Activated CD8-positive, alpha-beta memory T cell treated with anti-CD3 and anti-CD28 coated beads, Interleukin-2, amount 10 ng/mL, durations not matched to agents 7 days and 5 days (primary cell): ENCODE measurements at regions of chr13 and their contacts with region 1.

Region 1: GRCh38 chr13:26985285-26985878 is 186.2 kb downstream of the USP12 start:
- DNase-seq: peak; percentile 86
- ATAC-seq: peak; percentile 91
- H3K4me3 Mint-ChIP-seq: no peak overlapping the region
- H3K27ac Mint-ChIP-seq: no peak overlapping the region
- H3K4me1 Mint-ChIP-seq: peaks cover 21% of the 10 kb centered on the region
- H3K27me3 Mint-ChIP-seq: peaks cover 17% of the 10 kb centered on the region

Region 2: DNA sequence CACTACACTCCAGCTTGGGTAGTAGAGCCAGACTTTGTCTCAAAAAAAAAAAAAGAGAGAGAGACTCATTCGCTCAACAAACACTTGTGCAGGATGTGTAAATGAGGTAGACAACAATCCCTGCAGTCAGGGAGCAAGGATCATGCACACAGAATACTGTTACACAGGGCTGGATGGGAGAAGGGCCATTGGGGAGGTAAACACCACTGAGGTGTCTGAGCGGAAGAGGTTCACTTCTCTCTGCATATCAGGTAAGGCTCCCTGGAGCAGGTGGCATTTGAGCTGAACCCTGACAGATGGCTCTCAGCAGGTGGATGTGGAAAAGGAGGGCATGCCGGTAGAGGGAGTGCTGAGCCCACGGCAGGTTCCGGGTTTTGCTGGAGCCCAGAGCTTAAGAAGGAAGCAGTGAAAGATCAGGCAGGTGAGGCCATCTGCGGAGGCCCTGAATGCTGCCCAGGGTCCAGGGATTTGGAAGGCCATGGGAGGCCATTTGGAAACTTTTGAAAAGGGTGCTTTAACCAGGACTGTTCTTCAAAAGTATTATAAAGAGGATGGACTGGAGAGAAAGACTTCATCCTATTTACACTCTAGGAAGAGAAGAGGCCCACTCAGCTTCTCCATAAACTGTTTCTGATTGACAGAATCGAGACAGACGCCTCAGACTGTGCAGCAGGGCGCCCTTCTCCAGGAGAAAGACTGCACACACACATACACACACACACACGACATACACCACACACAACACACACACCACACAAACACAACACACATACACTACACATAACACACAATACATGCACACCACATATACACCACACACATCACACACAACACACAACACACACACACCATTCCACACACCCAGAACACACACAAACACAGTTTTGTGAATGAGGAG is 13.1 kb before region 1 on chr13:
- CTCF ChIA-PET with region 1: interaction called, 17 read pairs
- DNase-seq: peak; percentile 57
- ATAC-seq: peak; percentile 78
- H3K4me3 Mint-ChIP-seq: no peak overlapping the region
- H3K27ac Mint-ChIP-seq: no peak overlapping the region
- H3K4me1 Mint-ChIP-seq: peaks cover 5% of the 10 kb centered on the region
- H3K27me3 Mint-ChIP-seq: peaks cover 3% of the 10 kb centered on the region

Region 3: GRCh38 chr13:26996965-26997752 is 11.8 kb after region 1 on chr13:
- CTCF ChIA-PET with region 1: interaction called, 15 read pairs
- DNase-seq: peak; percentile 56
- ATAC-seq: peak; percentile 89
- H3K4me3 Mint-ChIP-seq: peak overlapping the region; percentile 11
- H3K27ac Mint-ChIP-seq: peak overlapping the region; percentile 65
- H3K4me1 Mint-ChIP-seq: peaks cover 19% of the 10 kb centered on the region
- H3K27me3 Mint-ChIP-seq: peaks cover 22% of the 10 kb centered on the region

Region 4: DNA sequence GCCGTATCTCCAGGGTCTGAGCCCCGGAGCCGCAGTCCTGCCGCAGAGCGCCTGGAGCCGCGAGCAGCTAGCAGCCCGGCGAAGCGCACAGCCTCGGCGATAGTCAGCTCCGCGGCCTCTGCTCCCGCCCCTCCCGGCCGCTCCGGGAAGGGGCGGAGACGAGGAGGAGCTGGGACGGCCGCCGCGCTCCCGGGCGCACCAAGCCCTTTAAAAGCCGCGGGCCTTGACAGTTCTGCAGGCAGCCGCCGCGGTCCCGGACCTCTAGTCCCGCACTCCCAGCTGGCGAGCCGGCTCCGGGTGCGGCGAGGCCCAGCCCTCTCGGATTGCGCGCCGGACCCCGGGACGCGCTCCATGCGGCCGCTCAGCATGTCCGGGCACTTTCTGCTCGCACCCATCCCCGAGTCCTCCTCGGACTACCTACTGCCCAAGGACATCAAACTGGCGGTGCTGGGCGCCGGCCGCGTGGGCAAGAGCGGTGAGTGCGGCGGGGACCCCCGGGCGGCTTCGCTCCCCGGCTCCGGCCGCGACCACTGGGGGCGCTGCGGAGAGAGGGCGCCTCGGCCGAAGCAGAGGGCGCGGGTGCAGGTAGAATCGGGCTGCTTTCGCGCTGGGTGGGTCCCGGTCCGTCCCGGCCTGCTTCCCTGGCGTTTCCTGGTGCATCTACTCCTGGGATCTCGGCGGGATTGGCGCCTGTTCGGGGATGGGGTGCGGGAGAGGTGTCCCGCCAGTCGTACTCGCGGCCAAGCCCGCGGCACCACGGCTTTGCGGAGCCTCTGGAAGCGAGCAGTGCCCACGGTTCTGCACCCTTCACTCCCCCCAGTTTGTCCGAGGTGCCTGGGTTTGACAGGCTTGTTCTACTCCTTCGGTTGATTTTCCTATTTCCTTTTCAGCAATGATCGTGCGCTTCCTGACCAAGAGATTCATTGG is 285.5 kb after region 1 on chr13 and contains the start of gene RASL11A:
- CTCF ChIA-PET with region 1: interaction called, 13 read pairs
- DNase-seq: peak; percentile 73
- ATAC-seq: peak; percentile 94
- H3K4me3 Mint-ChIP-seq: peak within 1 kb of the TSS; percentile 80
- H3K27ac Mint-ChIP-seq: no peak within 1 kb of the TSS
- H3K4me1 Mint-ChIP-seq: peaks cover 6% of the 10 kb centered on the region
- H3K27me3 Mint-ChIP-seq: peaks cover 39% of the 10 kb centered on the region
- total RNA-seq, gene RASL11A: 0.70 to 0.91 TPM

Region 5: GRCh38 chr13:27283906-27284493 is 298.6 kb after region 1 on chr13:
- CTCF ChIA-PET with region 1: interaction called, 22 read pairs
- DNase-seq: peak; percentile 48
- ATAC-seq: peak; percentile 53
- H3K4me3 Mint-ChIP-seq: no peak overlapping the region
- H3K27ac Mint-ChIP-seq: no peak overlapping the region
- H3K4me1 Mint-ChIP-seq: no peaks in the 10 kb centered on the region
- H3K27me3 Mint-ChIP-seq: no peaks in the 10 kb centered on the region

Region 6: GRCh38 chr13:27353166-27353583 is 367.8 kb after region 1 on chr13:
- CTCF ChIA-PET with region 1: interaction called, 195 read pairs
- DNase-seq: peak; percentile 78
- ATAC-seq: peak; percentile 99
- H3K4me3 Mint-ChIP-seq: peak overlapping the region; percentile 64
- H3K27ac Mint-ChIP-seq: peak overlapping the region; percentile 84
- H3K4me1 Mint-ChIP-seq: peaks cover 22% of the 10 kb centered on the region
- H3K27me3 Mint-ChIP-seq: peaks cover 15% of the 10 kb centered on the region

Region 7: DNA sequence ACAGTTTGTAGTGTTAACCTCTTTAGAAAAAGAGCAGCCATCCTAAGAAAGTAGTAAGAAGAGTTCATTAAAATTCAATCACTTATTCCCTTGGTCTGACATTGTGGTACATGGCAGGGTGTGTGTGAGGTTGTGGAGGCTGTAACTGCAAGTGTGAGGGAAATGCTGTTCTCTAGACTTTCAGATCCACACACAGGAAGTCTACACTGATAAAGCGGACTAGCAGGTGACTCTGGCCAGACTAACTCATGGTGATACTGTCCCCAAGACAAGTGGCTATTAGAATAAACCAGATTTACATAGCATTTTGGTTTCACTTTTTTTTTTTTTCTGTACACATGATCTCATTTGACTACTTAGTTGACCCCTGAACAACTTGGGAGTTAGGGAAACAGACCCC is 455.0 kb after region 1 on chr13:
- CTCF ChIA-PET with region 1: no interaction called
- DNase-seq: no peak
- ATAC-seq: no peak
- H3K4me3 Mint-ChIP-seq: no peak overlapping the region
- H3K27ac Mint-ChIP-seq: peak overlapping the region; percentile 65
- H3K4me1 Mint-ChIP-seq: peaks cover 46% of the 10 kb centered on the region
- H3K27me3 Mint-ChIP-seq: no peaks in the 10 kb centered on the region